ENCODE measurements at regions of chr2 and their contacts with region 1.

Region 1: DNA sequence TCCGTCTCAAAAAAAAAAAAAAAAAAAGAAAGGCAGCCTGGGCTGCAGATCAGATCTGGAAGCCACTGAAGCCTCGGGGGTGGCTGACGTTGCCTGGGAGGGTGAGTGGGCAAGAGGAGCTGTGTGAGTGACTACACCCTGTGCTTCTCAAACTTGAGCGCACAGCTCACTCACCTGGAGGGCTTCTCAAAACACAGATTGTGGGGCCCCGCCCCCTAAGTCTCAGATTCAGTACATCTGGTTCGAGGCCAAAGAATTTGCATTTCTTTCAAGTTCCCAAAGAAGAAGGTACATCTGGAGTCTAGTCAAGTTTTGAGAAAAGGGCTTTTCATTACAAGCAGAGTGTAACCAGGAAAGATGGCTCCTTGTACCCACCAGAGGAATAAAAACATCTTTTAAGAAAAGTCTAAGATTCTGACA is 97.7 kb upstream of the CAB39 start:
- DNase-seq: peak; percentile 82
- ATAC-seq: peak; percentile 89
- H3K4me3 Mint-ChIP-seq: no peak overlapping the region
- H3K27ac Mint-ChIP-seq: peak overlapping the region; percentile 69
- H3K4me1 Mint-ChIP-seq: peaks cover 35% of the 10 kb centered on the region
- H3K27me3 Mint-ChIP-seq: no peaks in the 10 kb centered on the region

Region 2: GRCh38 chr2:229921892-229922445 is 693.0 kb before region 1 on chr2 and contains the start of gene TRIP12:
- CTCF ChIA-PET with region 1: no interaction called
- POLR2A ChIA-PET with region 1: no interaction called
- intact Hi-C with region 1: loop called in 1 of 2 experiments (anchors 5 kb)
- DNase-seq: peak; percentile 93
- ATAC-seq: peak; percentile 82
- H3K4me3 Mint-ChIP-seq: peak within 1 kb of the TSS; percentile 100
- H3K27ac Mint-ChIP-seq: peak within 1 kb of the TSS; percentile 99
- H3K4me1 Mint-ChIP-seq: peaks cover 35% of the 10 kb centered on the region
- H3K27me3 Mint-ChIP-seq: no peaks in the 10 kb centered on the region
- total RNA-seq, gene TRIP12: 231 to 382 TPM

Region 3: DNA sequence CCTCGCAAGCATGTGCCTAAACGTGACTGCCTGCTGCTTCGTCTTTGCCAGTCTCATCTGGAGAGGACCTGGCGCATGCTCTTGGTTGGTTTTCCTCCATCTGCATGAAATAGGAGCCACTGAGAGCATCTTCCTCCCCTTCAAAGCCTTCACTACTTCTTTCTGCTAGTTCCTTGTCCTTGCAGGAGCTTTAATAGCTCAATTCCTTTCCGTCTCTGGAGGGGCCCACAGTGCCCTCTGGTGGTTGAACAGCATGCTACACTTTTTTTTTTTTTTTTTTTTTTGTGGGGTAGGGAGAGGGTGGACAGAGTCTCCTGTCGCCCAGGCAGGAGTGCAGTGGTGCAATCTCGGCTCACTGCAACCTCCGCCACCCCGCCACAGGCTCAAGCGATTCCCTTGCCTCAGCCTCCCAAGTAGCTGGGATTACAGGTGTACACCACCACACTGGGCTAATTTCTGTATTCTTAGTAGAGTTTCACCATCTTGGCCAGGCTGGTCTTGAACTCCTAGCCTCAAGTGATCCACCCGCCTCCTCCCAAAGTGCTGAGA is 454.7 kb before region 1 on chr2:
- CTCF ChIA-PET with region 1: no interaction called
- POLR2A ChIA-PET with region 1: no interaction called
- intact Hi-C with region 1: loop called in 1 of 2 experiments (anchors 1 kb)
- DNase-seq: peak; percentile 72
- ATAC-seq: peak; percentile 59
- H3K4me3 Mint-ChIP-seq: no peak overlapping the region
- H3K27ac Mint-ChIP-seq: no peak overlapping the region
- H3K4me1 Mint-ChIP-seq: peaks cover 8% of the 10 kb centered on the region
- H3K27me3 Mint-ChIP-seq: no peaks in the 10 kb centered on the region

Region 4: DNA sequence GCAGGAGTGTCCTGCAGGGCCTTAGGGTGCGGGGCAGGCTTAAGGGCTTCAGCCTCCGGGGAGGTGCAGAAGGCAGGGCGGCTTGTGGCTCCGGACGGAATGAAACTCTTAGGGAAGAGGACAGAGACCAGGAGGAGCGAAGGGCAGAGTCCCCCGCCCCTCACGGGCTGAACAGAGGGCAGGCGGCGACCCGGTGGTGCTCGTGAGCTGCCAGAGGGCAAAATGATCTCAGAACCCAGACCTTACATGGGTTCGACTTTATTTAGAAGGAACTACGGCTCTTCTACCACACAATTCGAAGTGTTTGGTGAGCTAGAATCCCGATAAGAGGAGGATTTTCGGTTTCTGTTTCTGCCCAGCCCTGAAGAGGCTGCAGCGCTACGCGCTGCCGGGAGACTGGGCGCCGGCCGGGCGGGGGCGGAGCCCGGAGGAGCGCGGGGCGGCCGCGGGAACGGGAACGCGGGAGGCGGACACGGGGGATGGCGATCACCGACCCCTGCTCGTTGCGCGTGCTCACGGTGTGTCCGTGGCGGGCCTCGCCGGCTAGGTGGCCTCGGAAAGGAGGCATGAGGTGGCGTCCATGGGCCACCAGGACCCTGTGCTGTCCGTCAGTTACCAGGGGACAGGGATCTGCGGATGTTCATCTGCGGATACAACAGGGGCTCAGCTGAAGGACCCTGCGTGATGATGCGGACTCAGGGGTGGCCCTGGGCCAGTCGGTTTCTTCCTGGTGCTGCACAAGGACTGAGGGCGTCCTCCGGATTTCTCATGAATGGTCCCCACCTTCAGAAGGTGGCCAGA is 203.2 kb before region 1 on chr2:
- CTCF ChIA-PET with region 1: interaction called, 3 read pairs
- POLR2A ChIA-PET with region 1: no interaction called
- intact Hi-C with region 1: loop called (anchors 2 to 5 kb)
- DNase-seq: peak; percentile 76
- ATAC-seq: peak; percentile 66
- H3K4me3 Mint-ChIP-seq: peak overlapping the region; percentile 85
- H3K27ac Mint-ChIP-seq: peak overlapping the region; percentile 96
- H3K4me1 Mint-ChIP-seq: peaks cover 60% of the 10 kb centered on the region
- H3K27me3 Mint-ChIP-seq: no peaks in the 10 kb centered on the region

Region 5: GRCh38 chr2:230658877-230659652 is 44.1 kb after region 1 on chr2:
- CTCF ChIA-PET with region 1: interaction called, 4 read pairs
- POLR2A ChIA-PET with region 1: interaction called, 3 read pairs
- intact Hi-C with region 1: loop called in 1 of 2 experiments (anchors 1 kb)
- DNase-seq: peak; percentile 90
- ATAC-seq: peak; percentile 74
- H3K4me3 Mint-ChIP-seq: peak overlapping the region; percentile 73
- H3K27ac Mint-ChIP-seq: peak overlapping the region; percentile 97
- H3K4me1 Mint-ChIP-seq: peaks cover 92% of the 10 kb centered on the region
- H3K27me3 Mint-ChIP-seq: no peaks in the 10 kb centered on the region